Heart right ventricle (tissue), 16 donors: ENCODE measurements at regions of chr1 and their contacts with region 1.

Region 1: GRCh38 chr1:32612189-32612881 is 38.0 kb downstream of the ZBTB8OS start:
- DNase-seq: peak; percentile 84 to 89
- ATAC-seq: peak; percentile 99 to 100 (median 100)
- H3K4me3 ChIP-seq: peak overlapping the region; percentile 26 to 68 (median 50)
- H3K27ac ChIP-seq: peak overlapping the region in 9 of 10 donors; percentile 45 to 82 (median 63)
- H3K4me1 ChIP-seq: peaks cover 0 to 16% (median 5%) of the 10 kb centered on the region in 9 donors
- H3K27me3 ChIP-seq: no peaks in the 10 kb centered on the region
- CTCF ChIP-seq: peak in 7 of 9 donors; percentile 31 to 55 (median 46)

Region 2: DNA sequence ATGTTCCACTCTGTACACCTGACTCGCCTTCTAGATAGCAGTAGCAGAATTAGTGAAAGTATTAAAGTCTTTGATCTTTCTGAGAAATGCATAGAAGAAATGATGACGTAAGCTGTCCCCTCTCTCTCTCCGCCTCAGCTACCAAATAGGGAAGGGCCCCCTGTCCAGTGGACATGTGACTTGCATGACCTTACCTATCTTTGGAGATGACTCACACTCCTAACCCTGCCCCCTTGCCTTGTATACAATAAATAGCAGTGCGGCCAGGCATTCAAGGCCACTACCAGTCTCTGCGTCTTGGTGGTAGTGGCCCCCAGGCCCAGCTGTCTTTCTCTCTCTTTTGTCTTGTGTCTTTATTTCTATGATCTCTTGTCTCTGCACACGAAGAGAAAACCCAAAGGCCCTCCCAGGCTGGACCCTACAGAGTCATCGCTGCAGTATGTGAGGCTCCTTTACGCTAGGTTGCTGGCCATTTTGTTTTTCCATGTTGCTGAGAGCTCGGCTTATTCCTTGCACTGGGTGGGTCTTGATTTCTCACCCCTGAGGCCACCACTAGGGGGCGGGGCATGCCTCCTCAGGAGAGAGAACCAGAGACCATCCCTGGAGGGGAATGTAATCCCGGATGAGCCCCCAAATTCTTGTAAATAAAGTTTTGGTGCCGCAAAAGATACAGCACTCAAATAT is 163.4 kb before region 1 on chr1:
- intact Hi-C with region 1: loop called in 2 of 10 experiments (anchors 10 kb)
- DNase-seq: no peak
- ATAC-seq: no peak
- H3K4me3 ChIP-seq: no peak overlapping the region
- H3K27ac ChIP-seq: no peak overlapping the region
- H3K4me1 ChIP-seq: peaks cover 0 to 6% (median 0%) of the 10 kb centered on the region in 9 donors
- H3K27me3 ChIP-seq: peaks cover 0 to 10% (median 0%) of the 10 kb centered on the region in 7 donors
- CTCF ChIP-seq: no peak

Region 3: DNA sequence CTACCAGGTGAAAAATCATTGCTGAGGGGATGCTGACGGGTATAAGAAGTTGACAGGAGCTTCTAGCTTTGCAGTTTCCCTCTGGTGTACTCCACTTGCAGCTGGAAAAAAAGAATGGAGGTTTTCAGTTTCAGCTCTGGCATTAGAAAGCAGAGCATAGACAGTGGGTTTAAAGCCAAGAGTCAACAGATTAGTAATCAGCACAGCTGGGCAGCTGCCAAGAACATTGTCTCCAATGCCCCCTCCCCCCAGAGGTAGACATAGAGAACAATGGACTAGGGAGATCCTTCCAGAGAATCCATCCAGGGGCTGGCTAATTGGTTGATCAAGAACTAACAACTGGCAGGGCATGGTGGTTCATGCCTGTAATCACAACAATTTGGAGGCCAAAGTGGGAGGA is 157.6 kb before region 1 on chr1:
- intact Hi-C with region 1: loop called in 2 of 10 experiments (anchors 10 kb)
- DNase-seq: peak; percentile 11 to 23
- ATAC-seq: peak in 3 of 8 donors; percentile 34 to 66 (median 53)
- H3K4me3 ChIP-seq: no peak overlapping the region
- H3K27ac ChIP-seq: no peak overlapping the region
- H3K4me1 ChIP-seq: peaks cover 0 to 7% (median 0%) of the 10 kb centered on the region in 9 donors
- H3K27me3 ChIP-seq: peaks cover 0 to 4% (median 0%) of the 10 kb centered on the region in 7 donors
- CTCF ChIP-seq: no peak

Region 4: GRCh38 chr1:32521165-32521564 is 91.2 kb before region 1 on chr1:
- intact Hi-C with region 1: loop called in 3 of 10 experiments (anchors 10 kb)
- DNase-seq: no peak
- ATAC-seq: no peak
- H3K4me3 ChIP-seq: peak overlapping the region in 3 of 10 donors; percentile 41 to 46 (median 45)
- H3K27ac ChIP-seq: no peak overlapping the region
- H3K4me1 ChIP-seq: peaks cover 0 to 10% (median 0%) of the 10 kb centered on the region in 9 donors
- H3K27me3 ChIP-seq: no peaks in the 10 kb centered on the region
- CTCF ChIP-seq: no peak

Region 5: DNA sequence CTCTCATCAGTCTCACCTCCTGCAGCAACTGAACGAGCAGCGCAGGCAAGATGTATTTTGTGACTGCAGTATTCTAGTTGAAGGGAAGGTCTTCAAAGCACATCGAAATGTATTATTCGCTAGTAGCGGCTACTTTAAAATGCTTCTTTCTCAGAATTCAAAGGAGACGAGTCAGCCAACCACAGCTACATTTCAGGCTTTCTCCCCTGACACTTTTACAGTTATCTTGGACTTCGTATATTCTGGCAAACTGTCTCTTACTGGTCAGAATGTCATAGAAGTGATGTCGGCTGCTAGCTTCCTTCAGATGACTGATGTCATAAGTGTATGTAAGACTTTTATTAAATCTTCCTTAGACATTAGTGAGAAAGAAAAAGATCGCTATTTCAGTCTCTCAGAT is 19.4 kb before region 1 on chr1:
- intact Hi-C with region 1: no loop called
- DNase-seq: no peak
- ATAC-seq: no peak
- H3K4me3 ChIP-seq: no peak overlapping the region
- H3K27ac ChIP-seq: no peak overlapping the region
- H3K4me1 ChIP-seq: no peaks in the 10 kb centered on the region
- H3K27me3 ChIP-seq: no peaks in the 10 kb centered on the region
- CTCF ChIP-seq: no peak

Region 6: GRCh38 chr1:32650752-32651460 is 38.6 kb after region 1 on chr1 and contains the start of gene RBBP4:
- intact Hi-C with region 1: loop called in 1 of 10 experiments (anchors 2 kb)
- DNase-seq: peak; percentile 97 to 99
- ATAC-seq: peak; percentile 96 to 98 (median 97)
- H3K4me3 ChIP-seq: peak within 1 kb of the TSS; percentile 61 to 95 (median 79)
- H3K27ac ChIP-seq: peak within 1 kb of the TSS; percentile 93 to 100 (median 98)
- H3K4me1 ChIP-seq: peaks cover 3 to 65% (median 37%) of the 10 kb centered on the region in 9 donors
- H3K27me3 ChIP-seq: no peaks in the 10 kb centered on the region
- CTCF ChIP-seq: peak in 2 of 9 donors; percentile 4 to 36
- total RNA-seq, gene RBBP4: 86.6 to 119 (median 110) TPM